CD4-positive, alpha-beta memory T cell (primary cell): ENCODE measurements at regions of chr12 and their contacts with region 1.

Region 1: GRCh38 chr12:7959701-7960121 is 23.7 kb upstream of the SLC2A3 start:
- DNase-seq: peak; percentile 32 to 59 (median 55)
- H3K4me3 ChIP-seq: peak overlapping the region; percentile 30 to 54
- H3K4me3 Mint-ChIP-seq: peak overlapping the region; percentile 81 to 96 (median 92)
- H3K27ac ChIP-seq: peak overlapping the region; percentile 69
- H3K27ac Mint-ChIP-seq: peak overlapping the region; percentile 85 to 99 (median 96)
- H3K4me1 ChIP-seq: peaks cover 39% of the 10 kb centered on the region
- H3K4me1 Mint-ChIP-seq: peaks cover 26 to 44% (median 35%) of the 10 kb centered on the region in 4 donors
- H3K27me3 ChIP-seq: no peaks in the 10 kb centered on the region
- H3K27me3 Mint-ChIP-seq: no peaks in the 10 kb centered on the region

Region 2: DNA sequence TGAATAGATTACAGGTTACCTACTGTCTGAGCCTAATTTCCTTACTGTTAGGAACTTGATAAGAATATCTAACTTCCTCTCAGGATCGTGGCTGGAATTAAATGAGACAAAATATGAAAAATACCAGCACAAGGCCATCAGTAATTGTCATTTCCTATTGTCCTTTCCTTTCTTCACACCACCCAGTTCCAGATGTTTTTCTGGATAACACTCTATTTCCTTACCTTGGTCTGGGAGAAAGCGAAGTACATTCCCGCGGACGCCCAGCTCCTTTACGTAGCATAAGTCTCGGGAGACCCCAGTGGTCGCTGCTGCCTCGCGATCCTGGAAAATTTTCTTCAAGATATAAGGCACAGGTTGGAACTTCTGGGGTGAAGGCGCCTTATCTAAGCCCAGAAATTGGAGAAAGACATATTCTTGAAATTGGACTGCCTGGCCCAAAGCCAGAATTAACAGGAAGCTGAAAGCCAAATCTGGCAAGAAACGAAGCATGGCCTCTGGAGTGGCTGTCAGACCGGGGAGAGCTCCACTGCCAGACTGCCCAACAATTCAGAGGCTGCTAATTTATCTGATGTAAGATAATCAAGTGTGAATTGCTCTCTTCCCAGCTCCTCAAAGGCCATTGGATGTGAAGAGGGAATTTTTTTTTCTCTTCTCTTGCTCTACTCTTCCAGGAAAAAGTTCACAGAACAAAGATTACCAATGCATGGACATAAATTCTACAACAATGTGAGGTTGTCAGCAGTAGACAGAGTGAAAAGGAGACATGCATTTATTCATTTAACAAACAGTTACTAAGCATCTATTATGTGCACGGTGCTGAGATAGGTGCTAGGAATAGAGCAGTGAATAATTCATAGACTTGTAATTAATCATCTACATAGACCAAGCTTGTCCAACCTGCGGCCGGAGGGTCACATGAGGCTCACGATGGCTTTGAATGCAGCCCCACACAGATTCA is 264.2 kb before region 1 on chr12 and contains the start of gene GDF3:
- CTCF ChIA-PET with region 1: no interaction called
- POLR2A ChIA-PET with region 1: no interaction called
- intact Hi-C with region 1: no loop called
- DNase-seq: peak in 1 of 5 donors; percentile 4
- H3K4me3 ChIP-seq: no peak within 1 kb of the TSS
- H3K4me3 Mint-ChIP-seq: peak within 1 kb of the TSS in 1 of 8 donors; percentile 52
- H3K27ac ChIP-seq: no peak within 1 kb of the TSS
- H3K27ac Mint-ChIP-seq: no peak within 1 kb of the TSS
- H3K4me1 ChIP-seq: peaks cover 7% of the 10 kb centered on the region
- H3K4me1 Mint-ChIP-seq: peaks cover 4 to 15% (median 6%) of the 10 kb centered on the region in 4 donors
- H3K27me3 ChIP-seq: no peaks in the 10 kb centered on the region
- H3K27me3 Mint-ChIP-seq: peaks cover 3 to 11% of the 10 kb centered on the region in 2 donors
- total RNA-seq, gene GDF3: not detected

Region 3: GRCh38 chr12:7899755-7900154 is 60.0 kb before region 1 on chr12:
- CTCF ChIA-PET with region 1: no interaction called
- POLR2A ChIA-PET with region 1: no interaction called
- intact Hi-C with region 1: no loop called
- DNase-seq: no peak
- H3K4me3 ChIP-seq: no peak overlapping the region
- H3K4me3 Mint-ChIP-seq: no peak overlapping the region
- H3K27ac ChIP-seq: no peak overlapping the region
- H3K27ac Mint-ChIP-seq: no peak overlapping the region
- H3K4me1 ChIP-seq: no peaks in the 10 kb centered on the region
- H3K4me1 Mint-ChIP-seq: no peaks in the 10 kb centered on the region
- H3K27me3 ChIP-seq: no peaks in the 10 kb centered on the region
- H3K27me3 Mint-ChIP-seq: no peaks in the 10 kb centered on the region

Region 4: GRCh38 chr12:7948589-7949260 is 11.0 kb before region 1 on chr12:
- CTCF ChIA-PET with region 1: interaction called, 6 read pairs
- POLR2A ChIA-PET with region 1: interaction called, 14 read pairs
- intact Hi-C with region 1: no loop called
- DNase-seq: no peak
- H3K4me3 ChIP-seq: no peak overlapping the region
- H3K4me3 Mint-ChIP-seq: no peak overlapping the region
- H3K27ac ChIP-seq: no peak overlapping the region
- H3K27ac Mint-ChIP-seq: no peak overlapping the region
- H3K4me1 ChIP-seq: no peaks in the 10 kb centered on the region
- H3K4me1 Mint-ChIP-seq: peaks cover 0 to 4% (median under 1%) of the 10 kb centered on the region in 4 donors
- H3K27me3 ChIP-seq: no peaks in the 10 kb centered on the region
- H3K27me3 Mint-ChIP-seq: no peaks in the 10 kb centered on the region

Region 5: GRCh38 chr12:7989827-7990551 is 30.3 kb after region 1 on chr12:
- CTCF ChIA-PET with region 1: interaction called, 48 read pairs
- POLR2A ChIA-PET with region 1: interaction called, 75 read pairs
- intact Hi-C with region 1: loop called (anchors 1 kb)
- DNase-seq: peak; percentile 60 to 85 (median 67)
- H3K4me3 ChIP-seq: peak overlapping the region; percentile 14 to 46
- H3K4me3 Mint-ChIP-seq: peak overlapping the region; percentile 64 to 90 (median 80)
- H3K27ac ChIP-seq: peak overlapping the region; percentile 57
- H3K27ac Mint-ChIP-seq: peak overlapping the region; percentile 79 to 98 (median 95)
- H3K4me1 ChIP-seq: peaks cover 44% of the 10 kb centered on the region
- H3K4me1 Mint-ChIP-seq: peaks cover 21 to 36% (median 26%) of the 10 kb centered on the region in 4 donors
- H3K27me3 ChIP-seq: no peaks in the 10 kb centered on the region
- H3K27me3 Mint-ChIP-seq: no peaks in the 10 kb centered on the region

Region 6: DNA sequence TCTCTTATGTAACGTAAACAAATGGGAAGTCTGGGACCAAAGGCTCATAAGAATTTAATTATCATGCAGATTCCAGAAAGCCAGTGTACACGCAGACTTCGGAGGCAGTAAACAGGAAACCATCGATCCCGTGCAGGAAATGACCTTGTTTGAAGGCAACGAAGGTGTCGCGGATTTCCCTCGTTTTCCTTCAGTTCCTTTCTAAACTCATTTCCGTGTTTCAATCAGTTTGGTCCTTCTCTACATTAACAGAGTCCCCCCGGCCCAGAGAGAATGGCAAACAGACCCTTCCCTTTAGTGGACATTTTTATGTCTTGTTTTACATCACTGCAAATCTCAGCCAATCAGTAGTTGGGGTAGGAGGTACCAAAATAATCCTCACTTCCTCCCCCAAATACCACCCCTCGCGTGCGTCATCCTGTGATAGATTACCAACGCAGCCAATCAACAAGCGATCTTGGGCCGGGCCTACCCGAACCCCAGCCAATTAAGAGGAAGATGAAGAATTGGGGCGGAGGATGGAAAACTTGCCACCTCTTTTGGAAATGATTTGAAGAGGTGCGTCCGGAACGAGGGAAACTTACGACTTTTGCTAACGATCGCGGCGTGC is 66.7 kb after region 1 on chr12:
- CTCF ChIA-PET with region 1: interaction called, 6 read pairs
- POLR2A ChIA-PET with region 1: interaction called, 6 read pairs
- intact Hi-C with region 1: loop called (anchors 1 kb)
- DNase-seq: peak; percentile 97 to 99 (median 98)
- H3K4me3 ChIP-seq: peak overlapping the region; percentile 89 to 94
- H3K4me3 Mint-ChIP-seq: peak overlapping the region; percentile 90 to 99 (median 96)
- H3K27ac ChIP-seq: peak overlapping the region; percentile 99
- H3K27ac Mint-ChIP-seq: peak overlapping the region; percentile 96 to 100 (median 100)
- H3K4me1 ChIP-seq: peaks cover 14% of the 10 kb centered on the region
- H3K4me1 Mint-ChIP-seq: peaks cover 10 to 20% (median 15%) of the 10 kb centered on the region in 4 donors
- H3K27me3 ChIP-seq: no peaks in the 10 kb centered on the region
- H3K27me3 Mint-ChIP-seq: no peaks in the 10 kb centered on the region

Region 7: DNA sequence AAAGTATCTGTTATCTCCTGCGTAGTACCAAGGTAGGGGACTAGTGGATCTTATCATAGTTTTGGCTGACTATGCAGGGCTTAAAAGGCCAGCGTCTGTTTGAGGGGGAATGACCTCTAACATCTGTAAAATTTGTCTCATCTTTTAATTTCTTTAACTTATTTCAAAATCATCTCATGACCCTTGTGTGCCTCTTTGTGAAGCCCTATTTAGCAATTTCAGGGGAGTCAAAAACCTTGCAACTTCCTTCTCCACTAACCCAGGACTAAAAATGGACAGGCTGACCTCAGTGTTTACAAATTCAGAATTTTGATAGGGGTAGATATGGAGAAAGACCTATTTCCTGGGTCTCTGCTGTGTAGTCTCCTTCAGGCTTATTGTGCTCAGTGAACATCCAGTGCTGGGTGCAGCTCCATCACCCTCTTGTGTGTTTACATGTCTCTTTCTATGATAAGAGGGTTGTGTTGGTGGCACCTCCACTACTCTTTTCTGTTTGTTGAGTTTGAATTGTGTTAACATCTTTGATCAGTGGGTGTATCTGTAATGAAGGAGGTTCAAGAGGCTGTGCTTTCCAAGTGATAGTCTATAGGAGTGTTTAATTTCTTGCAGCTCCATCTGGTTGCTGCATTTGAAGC is 136.7 kb after region 1 on chr12:
- CTCF ChIA-PET with region 1: no interaction called
- POLR2A ChIA-PET with region 1: no interaction called
- intact Hi-C with region 1: no loop called
- DNase-seq: no peak
- H3K4me3 ChIP-seq: no peak overlapping the region
- H3K4me3 Mint-ChIP-seq: no peak overlapping the region
- H3K27ac ChIP-seq: no peak overlapping the region
- H3K27ac Mint-ChIP-seq: peak overlapping the region in 2 of 7 donors; percentile 2 to 64
- H3K4me1 ChIP-seq: no peaks in the 10 kb centered on the region
- H3K4me1 Mint-ChIP-seq: peaks cover 6 to 12% (median 10%) of the 10 kb centered on the region in 4 donors
- H3K27me3 ChIP-seq: no peaks in the 10 kb centered on the region
- H3K27me3 Mint-ChIP-seq: no peaks in the 10 kb centered on the region